ENCODE measurements at regions of chr15 and their contacts with region 1.

Region 1: DNA sequence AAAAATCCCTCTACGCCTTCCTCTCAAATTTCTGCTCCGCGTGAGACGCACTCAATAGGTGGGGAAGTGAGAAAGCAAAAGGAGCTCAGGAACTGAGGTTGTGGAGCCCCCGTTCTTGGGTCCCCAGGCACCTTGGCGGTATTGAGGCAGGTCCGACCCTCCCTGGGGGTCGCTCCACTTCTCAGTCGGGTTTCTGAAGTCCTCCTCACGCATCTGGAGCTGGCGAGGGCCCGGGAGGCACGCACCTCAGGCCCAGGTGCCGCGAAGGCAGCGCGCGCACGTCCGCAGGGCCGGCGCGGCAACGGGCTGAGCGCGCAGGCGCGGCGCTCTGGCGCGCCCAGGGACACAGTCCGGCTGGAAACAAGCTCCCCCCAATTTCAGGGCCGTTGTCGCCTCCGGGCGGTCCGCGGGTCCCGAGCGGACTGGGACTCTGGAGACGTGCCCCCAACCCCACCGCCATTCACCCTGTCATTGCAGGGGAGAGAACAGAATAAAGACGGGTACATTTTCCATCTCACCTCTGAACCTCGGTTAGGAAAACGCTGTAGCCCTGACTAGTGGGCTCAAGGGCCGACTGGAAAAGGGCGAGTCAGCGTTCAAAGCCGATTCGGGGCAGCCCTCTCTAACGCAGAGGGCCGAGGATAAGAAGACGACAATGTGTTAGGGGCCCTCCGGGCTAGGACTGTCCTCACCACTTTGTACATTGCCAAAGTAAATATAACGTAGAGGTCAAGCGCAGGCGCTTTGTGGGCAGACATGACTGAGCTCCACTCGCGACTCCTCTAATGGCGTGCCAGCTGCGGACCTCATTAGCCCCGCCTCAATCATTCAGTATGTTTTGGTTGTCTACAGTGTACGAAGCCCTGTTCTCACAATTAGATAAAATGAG is at the start of gene ZNF770:
- DNase-seq: peak; percentile 79
- ATAC-seq: peak; percentile 90
- H3K4me3 Mint-ChIP-seq: peak within 1 kb of the TSS; percentile 97
- H3K27ac Mint-ChIP-seq: peak within 1 kb of the TSS; percentile 96
- H3K4me1 Mint-ChIP-seq: peaks cover 29% of the 10 kb centered on the region
- H3K27me3 Mint-ChIP-seq: no peaks in the 10 kb centered on the region
- CTCF ChIP-seq: no peak
- total RNA-seq, gene ZNF770: 67.0 to 67.2 TPM

Region 2: DNA sequence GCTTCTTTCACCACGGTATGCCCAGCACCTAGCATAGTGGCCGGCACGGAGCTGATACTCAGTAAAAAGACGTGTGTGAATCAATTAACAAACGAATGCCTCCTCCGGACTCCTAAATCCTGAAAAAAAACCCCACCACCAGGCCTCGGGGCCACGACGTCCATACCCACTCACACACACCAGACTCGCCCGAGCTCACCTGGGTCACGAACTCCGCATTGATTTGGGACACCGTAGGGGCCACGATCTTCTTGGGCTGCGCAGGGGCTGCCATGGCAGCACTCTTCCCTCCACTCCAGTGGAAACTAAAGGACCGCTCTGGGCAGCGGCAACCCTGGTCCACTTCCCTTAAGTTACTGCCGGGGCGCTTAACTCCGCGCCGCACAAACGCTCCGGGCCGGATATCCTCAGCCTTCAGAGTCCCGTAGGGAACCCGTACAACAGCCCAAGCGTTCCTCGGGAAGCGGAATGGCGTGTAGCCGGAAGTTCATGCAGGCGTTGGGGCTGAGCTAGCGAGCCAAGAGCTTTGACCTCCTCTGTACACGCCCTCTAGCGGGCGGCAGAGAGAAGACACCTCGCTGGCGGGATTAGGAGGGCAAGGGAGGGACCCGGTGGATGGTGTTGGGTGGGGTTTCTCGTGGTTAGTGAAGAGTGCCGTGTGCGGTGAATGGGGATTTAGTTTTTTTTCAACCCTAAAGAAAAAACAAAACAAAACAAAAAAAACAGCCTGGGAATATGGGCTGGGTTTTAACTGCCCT is 18.7 kb before region 1 on chr15 and contains the start of gene AQR:
- CTCF ChIA-PET with region 1: interaction called, 20 read pairs
- POLR2A ChIA-PET with region 1: interaction called, 33 read pairs
- intact Hi-C with region 1: loop called (anchors 2 kb)
- DNase-seq: peak; percentile 94
- ATAC-seq: peak; percentile 98
- H3K4me3 Mint-ChIP-seq: peak within 1 kb of the TSS; percentile 100
- H3K27ac Mint-ChIP-seq: peak within 1 kb of the TSS; percentile 96
- H3K4me1 Mint-ChIP-seq: peaks cover 31% of the 10 kb centered on the region
- H3K27me3 Mint-ChIP-seq: no peaks in the 10 kb centered on the region
- CTCF ChIP-seq: peak; percentile 81
- total RNA-seq, gene AQR: 35.5 to 36.4 TPM

Region 3: DNA sequence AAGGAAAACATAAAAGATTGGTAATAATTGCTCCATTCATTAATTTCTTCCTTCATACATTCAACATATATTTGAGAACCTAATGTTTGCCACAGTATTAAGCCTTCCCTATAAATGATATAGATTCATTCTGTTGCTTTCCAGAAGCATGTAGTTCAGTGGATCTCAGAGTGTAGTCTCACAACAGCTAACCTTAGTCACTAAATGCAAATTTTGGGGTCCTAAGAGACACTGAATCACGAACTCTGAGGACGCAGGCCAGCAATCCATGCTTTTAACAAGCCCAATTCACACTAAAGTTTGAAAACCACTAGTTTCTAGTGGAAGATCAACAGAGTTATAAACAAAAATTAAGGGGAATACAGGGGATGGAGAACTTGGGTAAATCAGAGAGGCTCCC is 11.5 kb before region 1 on chr15:
- CTCF ChIA-PET with region 1: interaction called, 16 read pairs
- POLR2A ChIA-PET with region 1: interaction called, 33 read pairs
- intact Hi-C with region 1: no loop called
- DNase-seq: no peak
- ATAC-seq: no peak
- H3K4me3 Mint-ChIP-seq: no peak overlapping the region
- H3K27ac Mint-ChIP-seq: no peak overlapping the region
- H3K4me1 Mint-ChIP-seq: peaks cover 6% of the 10 kb centered on the region
- H3K27me3 Mint-ChIP-seq: no peaks in the 10 kb centered on the region
- CTCF ChIP-seq: no peak

Region 4: GRCh38 chr15:35019386-35020083 is 31.3 kb after region 1 on chr15:
- CTCF ChIA-PET with region 1: no interaction called
- POLR2A ChIA-PET with region 1: no interaction called
- intact Hi-C with region 1: no loop called
- DNase-seq: no peak
- ATAC-seq: no peak
- H3K4me3 Mint-ChIP-seq: no peak overlapping the region
- H3K27ac Mint-ChIP-seq: no peak overlapping the region
- H3K4me1 Mint-ChIP-seq: peaks cover 2% of the 10 kb centered on the region
- H3K27me3 Mint-ChIP-seq: peaks cover 10% of the 10 kb centered on the region
- CTCF ChIP-seq: no peak

Region 5: GRCh38 chr15:35061825-35062737 is 73.9 kb after region 1 on chr15:
- CTCF ChIA-PET with region 1: no interaction called
- POLR2A ChIA-PET with region 1: no interaction called
- intact Hi-C with region 1: no loop called
- DNase-seq: no peak
- ATAC-seq: no peak
- H3K4me3 Mint-ChIP-seq: no peak overlapping the region
- H3K27ac Mint-ChIP-seq: no peak overlapping the region
- H3K4me1 Mint-ChIP-seq: no peaks in the 10 kb centered on the region
- H3K27me3 Mint-ChIP-seq: no peaks in the 10 kb centered on the region
- CTCF ChIP-seq: no peak

Measured in activated CD8-positive, alpha-beta T cell treated with anti-CD3 and anti-CD28 coated beads for 36 hours (primary cell).